ENCODE measurements at regions of chr4 and their contacts with region 1.

Region 1: DNA sequence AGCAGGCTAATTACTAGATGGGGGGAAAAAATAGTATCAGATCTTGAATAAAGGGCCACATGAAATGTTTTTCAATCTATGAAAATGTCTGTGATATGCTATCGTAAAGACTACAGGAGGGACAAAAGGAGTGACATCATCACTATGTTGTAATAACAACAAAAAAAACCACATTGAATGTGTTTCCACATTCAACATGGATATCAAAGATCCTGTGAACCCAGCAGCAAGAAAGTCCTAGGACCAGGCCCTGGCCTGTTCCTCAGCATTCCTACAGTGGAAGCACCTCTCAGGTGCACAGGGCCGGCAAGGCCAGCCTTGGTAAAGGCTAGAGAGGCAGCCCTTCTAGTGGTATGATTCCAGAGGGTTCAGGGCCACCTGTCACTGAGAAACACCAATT is 118.3 kb downstream of the RELL1 start:
- DNase-seq: no peak

Region 2: DNA sequence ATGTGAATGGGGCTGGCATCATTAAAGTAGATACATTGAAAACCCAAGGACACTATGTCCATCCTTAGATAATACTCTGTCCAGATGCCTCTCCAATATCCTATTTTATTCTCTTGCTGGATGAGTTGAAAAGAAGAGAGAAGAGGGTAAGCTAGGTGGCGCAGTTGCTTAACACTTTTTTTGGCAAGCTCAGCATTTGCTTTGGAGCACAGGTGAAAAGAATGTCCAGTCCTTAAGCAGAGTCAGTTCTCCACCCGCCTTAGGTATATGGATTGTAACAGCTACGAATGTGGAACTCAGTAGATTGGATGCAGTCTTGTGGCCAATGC is 114.9 kb before region 1 on chr4:
- intact Hi-C with region 1: loop called (anchors 2 kb)
- DNase-seq: no peak

Measured in cardiac septum (tissue), 1 donor.